ENCODE measurements at regions of chr17 and their contacts with region 1.

Region 1: GRCh38 chr17:78745407-78746088 is 36.5 kb downstream of the CYTH1 start:
- DNase-seq: no peak
- H3K4me3 ChIP-seq: no peak overlapping the region
- H3K27ac ChIP-seq: peak overlapping the region in 1 of 4 donors; percentile 23
- H3K4me1 ChIP-seq: peaks cover 0 to 41% (median 34%) of the 10 kb centered on the region in 4 donors
- H3K27me3 ChIP-seq: no peaks in the 10 kb centered on the region
- CTCF ChIP-seq: peak; percentile 29 to 66 (median 40)
- EP300 ChIP-seq: no peak
- POLR2A ChIP-seq: no peak

Region 2: GRCh38 chr17:78689029-78689428 is 56.5 kb before region 1 on chr17:
- intact Hi-C with region 1: no loop called
- DNase-seq: no peak
- H3K4me3 ChIP-seq: no peak overlapping the region
- H3K27ac ChIP-seq: no peak overlapping the region
- H3K4me1 ChIP-seq: no peaks in the 10 kb centered on the region
- H3K27me3 ChIP-seq: no peaks in the 10 kb centered on the region
- CTCF ChIP-seq: no peak
- EP300 ChIP-seq: no peak
- POLR2A ChIP-seq: no peak

Region 3: GRCh38 chr17:78708510-78708973 is 37.0 kb before region 1 on chr17:
- intact Hi-C with region 1: loop called (anchors 5 kb)
- DNase-seq: peak; percentile 86
- H3K4me3 ChIP-seq: no peak overlapping the region
- H3K27ac ChIP-seq: no peak overlapping the region
- H3K4me1 ChIP-seq: peaks cover 0 to 30% (median 10%) of the 10 kb centered on the region in 4 donors
- H3K27me3 ChIP-seq: no peaks in the 10 kb centered on the region
- CTCF ChIP-seq: peak; percentile 77 to 86 (median 78)
- EP300 ChIP-seq: no peak
- POLR2A ChIP-seq: no peak

Measured in sigmoid colon (tissue), 7 donors.